Gastrocnemius medialis (tissue), 4 donors: ENCODE measurements at regions of chr2 and their contacts with region 1.

Region 1: GRCh38 chr2:26330113-26330549 is 15.8 kb upstream of the SELENOI start:
- DNase-seq: peak; percentile 65 to 84
- ATAC-seq: peak; percentile 88 to 99
- H3K4me3 ChIP-seq: no peak overlapping the region
- H3K27ac ChIP-seq: no peak overlapping the region
- H3K4me1 ChIP-seq: no peaks in the 10 kb centered on the region
- H3K27me3 ChIP-seq: no peaks in the 10 kb centered on the region
- CTCF ChIP-seq: peak; percentile 71 to 92 (median 85)
- POLR2A ChIP-seq: no peak

Region 2: DNA sequence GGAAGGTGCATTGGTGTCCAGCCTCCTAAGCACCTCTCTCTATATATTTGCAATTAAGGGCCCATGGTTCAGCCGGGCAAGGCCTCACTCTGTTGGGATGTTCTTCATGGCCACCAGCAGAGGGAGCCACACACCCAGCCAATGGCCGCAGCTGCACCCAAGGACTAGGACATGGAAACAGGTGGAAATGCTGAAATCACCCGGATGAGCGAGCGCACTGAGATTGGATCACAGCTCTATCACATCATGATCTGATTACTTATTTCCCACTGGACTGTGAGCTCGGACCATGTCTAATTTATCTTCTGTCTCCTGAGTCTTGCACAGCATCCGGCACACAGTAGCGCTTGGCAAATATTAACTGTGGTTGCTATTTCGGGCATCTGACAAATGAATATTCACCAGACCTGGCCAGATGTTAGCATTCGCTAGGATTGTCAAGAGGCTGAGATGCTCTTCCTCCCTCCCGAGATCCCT is 379.0 kb before region 1 on chr2:
- in situ Hi-C with region 1: loop called in 3 of 4 experiments (anchors 25 kb)
- intact Hi-C with region 1: loop called (anchors 2 kb)
- DNase-seq: peak; percentile 59 to 71
- ATAC-seq: peak; percentile 91 to 97
- H3K4me3 ChIP-seq: no peak overlapping the region
- H3K27ac ChIP-seq: peak overlapping the region in 2 of 4 donors; percentile 29 to 48
- H3K4me1 ChIP-seq: no peaks in the 10 kb centered on the region
- H3K27me3 ChIP-seq: no peaks in the 10 kb centered on the region
- CTCF ChIP-seq: peak; percentile 90 to 95 (median 92)
- POLR2A ChIP-seq: no peak

Region 3: GRCh38 chr2:26088032-26088643 is 242.0 kb before region 1 on chr2:
- in situ Hi-C with region 1: no loop called
- intact Hi-C with region 1: loop called (anchors 10 kb)
- DNase-seq: no peak
- ATAC-seq: peak; percentile 66 to 69
- H3K4me3 ChIP-seq: no peak overlapping the region
- H3K27ac ChIP-seq: peak overlapping the region; percentile 70 to 84 (median 77)
- H3K4me1 ChIP-seq: peaks cover 39 to 52% of the 10 kb centered on the region in 2 donors
- H3K27me3 ChIP-seq: no peaks in the 10 kb centered on the region
- CTCF ChIP-seq: peak; percentile 70 to 82 (median 76)
- POLR2A ChIP-seq: no peak

Region 4: DNA sequence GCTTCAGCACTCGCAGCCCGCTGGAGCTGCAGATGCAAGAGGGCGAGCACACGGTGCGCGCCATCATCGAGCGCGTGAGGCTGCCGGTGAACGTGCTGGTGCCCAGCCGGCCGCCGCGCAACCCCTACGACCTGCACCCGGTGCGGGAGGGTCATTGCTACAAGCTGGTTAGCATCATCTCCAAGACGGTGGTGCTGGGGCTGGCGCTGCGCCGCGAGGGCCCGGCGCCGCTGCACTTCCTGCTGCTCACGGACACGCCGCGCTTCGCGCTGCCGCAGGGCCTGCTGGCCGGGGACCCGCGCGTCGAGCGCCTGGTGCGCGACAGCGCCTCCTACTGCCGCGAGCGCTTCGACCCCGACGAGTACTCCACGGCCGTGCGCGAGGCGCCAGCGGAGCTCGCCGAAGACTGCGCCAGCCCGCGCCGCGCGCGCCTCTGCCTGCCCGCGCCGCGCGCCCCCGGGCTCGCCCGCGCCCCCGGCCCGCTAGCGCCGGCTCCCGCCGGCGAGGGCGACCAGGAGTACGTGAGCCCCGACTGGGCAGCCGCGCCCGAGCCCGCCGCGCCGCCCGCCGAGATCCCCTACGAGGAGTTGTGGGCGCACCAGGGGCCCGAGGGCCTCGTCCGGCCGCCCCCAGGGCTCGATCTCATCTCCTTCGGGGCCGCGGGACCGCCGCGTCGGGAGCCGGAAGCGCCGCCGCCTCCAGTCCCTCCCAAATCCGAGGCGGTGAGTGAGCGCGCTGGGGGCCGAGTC is 145.4 kb before region 1 on chr2:
- in situ Hi-C with region 1: loop called in 1 of 4 experiments (anchors 10 kb)
- intact Hi-C with region 1: loop called (anchors 2 kb)
- DNase-seq: peak in 1 of 2 donors; percentile 71
- ATAC-seq: peak; percentile 75 to 80
- H3K4me3 ChIP-seq: peak overlapping the region; percentile 59 to 67 (median 60)
- H3K27ac ChIP-seq: peak overlapping the region; percentile 28 to 72 (median 41)
- H3K4me1 ChIP-seq: no peaks in the 10 kb centered on the region
- H3K27me3 ChIP-seq: no peaks in the 10 kb centered on the region
- CTCF ChIP-seq: peak; percentile 42 to 73 (median 59)
- POLR2A ChIP-seq: no peak

Region 5: DNA sequence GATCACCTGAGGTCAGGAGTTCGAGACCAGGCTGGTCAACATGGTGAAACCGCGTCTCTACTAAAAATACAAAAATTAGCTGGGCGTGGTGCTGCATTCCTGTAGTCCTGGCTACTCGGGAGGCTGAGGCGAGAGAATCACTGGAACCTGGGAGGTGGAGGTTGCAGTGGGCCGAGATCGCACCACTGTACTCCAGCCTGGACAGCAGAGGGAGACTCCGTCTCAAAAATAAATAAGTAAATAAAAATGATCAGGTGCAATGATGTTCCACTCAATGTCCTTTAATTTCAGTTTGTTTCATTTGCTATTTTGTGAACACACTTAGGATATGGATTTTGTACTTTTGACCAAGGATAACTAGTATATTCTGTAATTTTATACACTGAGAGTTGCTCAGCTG is 95.0 kb before region 1 on chr2:
- in situ Hi-C with region 1: loop called in 3 of 4 experiments (anchors 5 to 10 kb)
- intact Hi-C with region 1: loop called (anchors 2 kb)
- DNase-seq: no peak
- ATAC-seq: no peak
- H3K4me3 ChIP-seq: no peak overlapping the region
- H3K27ac ChIP-seq: no peak overlapping the region
- H3K4me1 ChIP-seq: peaks cover 27 to 36% of the 10 kb centered on the region in 2 donors
- H3K27me3 ChIP-seq: no peaks in the 10 kb centered on the region
- CTCF ChIP-seq: peak; percentile 15 to 44 (median 26)
- POLR2A ChIP-seq: no peak

Region 6: GRCh38 chr2:26244309-26245121 is 85.6 kb before region 1 on chr2 and contains the starts of genes HADHA and HADHB:
- in situ Hi-C with region 1: loop called in 3 of 4 experiments (anchors 5 to 10 kb)
- intact Hi-C with region 1: loop called (anchors 2 kb)
- DNase-seq: peak; percentile 91 to 95
- ATAC-seq: peak; percentile 74 to 80
- H3K4me3 ChIP-seq: peak within 1 kb of the TSS; percentile 85 to 96 (median 92)
- H3K27ac ChIP-seq: peak within 1 kb of the TSS; percentile 95 to 98 (median 97)
- H3K4me1 ChIP-seq: peaks cover 50 to 63% of the 10 kb centered on the region in 2 donors
- H3K27me3 ChIP-seq: no peaks in the 10 kb centered on the region
- CTCF ChIP-seq: peak in 3 of 5 experiments; percentile 31 to 47 (median 41)
- POLR2A ChIP-seq: peak; percentile 87 to 91
- total RNA-seq, gene HADHA: 443 to 480 (median 462) TPM
- total RNA-seq, gene HADHB: 719 to 936 (median 781) TPM

Region 7: GRCh38 chr2:26274058-26274613 is 56.0 kb before region 1 on chr2:
- in situ Hi-C with region 1: no loop called
- intact Hi-C with region 1: loop called (anchors 2 kb)
- DNase-seq: peak; percentile 64 to 81
- ATAC-seq: peak; percentile 96 to 98
- H3K4me3 ChIP-seq: peak overlapping the region in 2 of 4 donors; percentile 8 to 15
- H3K27ac ChIP-seq: peak overlapping the region; percentile 81 to 84 (median 82)
- H3K4me1 ChIP-seq: peaks cover 32 to 35% of the 10 kb centered on the region in 2 donors
- H3K27me3 ChIP-seq: no peaks in the 10 kb centered on the region
- CTCF ChIP-seq: no peak
- POLR2A ChIP-seq: no peak

Region 8: DNA sequence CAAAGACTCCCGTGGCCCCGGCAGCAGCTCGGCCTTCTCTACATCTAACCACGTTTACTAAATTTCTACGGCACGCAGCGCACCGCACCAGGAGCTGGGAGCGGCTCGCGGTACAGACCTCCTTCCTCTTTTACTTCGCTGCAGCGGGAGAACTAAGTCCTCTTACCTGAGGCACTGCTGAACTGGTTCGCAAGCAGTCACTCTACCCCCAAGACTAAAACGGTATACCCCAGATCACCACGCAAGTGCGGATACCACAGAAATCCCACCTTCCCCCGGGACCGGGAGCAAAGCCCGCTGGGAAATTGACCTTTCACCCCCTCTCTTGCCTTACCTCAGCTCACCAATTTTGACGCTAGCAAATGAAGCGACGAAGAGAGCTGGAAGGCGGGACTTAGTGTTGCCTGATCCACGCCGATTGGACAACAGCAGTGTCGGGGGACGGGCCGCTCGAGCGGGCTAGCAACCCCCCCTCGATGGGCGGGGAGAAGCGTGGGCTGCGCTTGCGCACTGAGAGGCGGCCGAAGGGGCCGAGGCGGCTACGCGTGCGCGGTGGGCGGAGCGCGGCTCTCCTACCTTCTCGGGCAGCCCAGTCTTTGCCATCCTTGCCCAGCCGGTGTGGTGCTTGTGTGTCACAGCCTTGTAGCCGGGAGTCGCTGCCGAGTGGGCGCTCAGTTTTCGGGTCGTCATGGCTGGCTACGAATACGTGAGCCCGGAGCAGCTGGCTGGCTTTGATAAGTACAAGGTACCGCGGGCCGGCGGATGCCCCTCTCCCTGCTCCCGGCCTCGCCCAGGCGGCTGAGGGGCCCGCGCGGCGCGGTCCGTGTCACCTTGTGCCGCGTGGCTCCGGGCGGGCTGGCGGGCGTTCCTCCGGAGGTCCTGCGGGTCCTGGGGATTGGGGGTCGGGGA is 15.7 kb after region 1 on chr2 and contains the start of gene SELENOI:
- in situ Hi-C with region 1: no loop called
- intact Hi-C with region 1: no loop called
- DNase-seq: peak; percentile 99
- ATAC-seq: peak; percentile 99
- H3K4me3 ChIP-seq: peak within 1 kb of the TSS; percentile 87 to 95 (median 92)
- H3K27ac ChIP-seq: peak within 1 kb of the TSS; percentile 91 to 98 (median 95)
- H3K4me1 ChIP-seq: peaks cover 26 to 27% of the 10 kb centered on the region in 2 donors
- H3K27me3 ChIP-seq: no peaks in the 10 kb centered on the region
- CTCF ChIP-seq: no peak
- POLR2A ChIP-seq: peak; percentile 91 to 93
- total RNA-seq, gene SELENOI: 8.5 to 30.6 (median 17.0) TPM